ENCODE measurements at regions of chr1 and their contacts with region 1.

Region 1: GRCh38 chr1:220089650-220090556 is at the start of gene BPNT1:
- DNase-seq: peak; percentile 90 to 98
- H3K4me3 ChIP-seq: peak within 1 kb of the TSS; percentile 88
- H3K27ac ChIP-seq: peak within 1 kb of the TSS; percentile 21; the same call in 1 of the 2 replicates
- H3K4me1 ChIP-seq: peaks cover 7% of the 10 kb centered on the region
- H3K27me3 ChIP-seq: no peaks in the 10 kb centered on the region
- CTCF ChIP-seq: 0 out of 2 replicates have a peak, but pooled peaks have one; percentile 17
- total RNA-seq, gene BPNT1: 41.5 and 50.8 TPM in 2 replicates

Region 2: GRCh38 chr1:219798283-219799030 is 291.4 kb before region 1 on chr1:
- CTCF ChIA-PET with region 1: no interaction called
- POLR2A ChIA-PET with region 1: no interaction called
- intact Hi-C with region 1: no loop called
- DNase-seq: no peak
- H3K4me3 ChIP-seq: no peak overlapping the region
- H3K27ac ChIP-seq: no peak overlapping the region
- H3K4me1 ChIP-seq: no peaks in the 10 kb centered on the region; the same call in 1 of the 2 replicates
- H3K27me3 ChIP-seq: no peaks in the 10 kb centered on the region
- CTCF ChIP-seq: no peak

Region 3: DNA sequence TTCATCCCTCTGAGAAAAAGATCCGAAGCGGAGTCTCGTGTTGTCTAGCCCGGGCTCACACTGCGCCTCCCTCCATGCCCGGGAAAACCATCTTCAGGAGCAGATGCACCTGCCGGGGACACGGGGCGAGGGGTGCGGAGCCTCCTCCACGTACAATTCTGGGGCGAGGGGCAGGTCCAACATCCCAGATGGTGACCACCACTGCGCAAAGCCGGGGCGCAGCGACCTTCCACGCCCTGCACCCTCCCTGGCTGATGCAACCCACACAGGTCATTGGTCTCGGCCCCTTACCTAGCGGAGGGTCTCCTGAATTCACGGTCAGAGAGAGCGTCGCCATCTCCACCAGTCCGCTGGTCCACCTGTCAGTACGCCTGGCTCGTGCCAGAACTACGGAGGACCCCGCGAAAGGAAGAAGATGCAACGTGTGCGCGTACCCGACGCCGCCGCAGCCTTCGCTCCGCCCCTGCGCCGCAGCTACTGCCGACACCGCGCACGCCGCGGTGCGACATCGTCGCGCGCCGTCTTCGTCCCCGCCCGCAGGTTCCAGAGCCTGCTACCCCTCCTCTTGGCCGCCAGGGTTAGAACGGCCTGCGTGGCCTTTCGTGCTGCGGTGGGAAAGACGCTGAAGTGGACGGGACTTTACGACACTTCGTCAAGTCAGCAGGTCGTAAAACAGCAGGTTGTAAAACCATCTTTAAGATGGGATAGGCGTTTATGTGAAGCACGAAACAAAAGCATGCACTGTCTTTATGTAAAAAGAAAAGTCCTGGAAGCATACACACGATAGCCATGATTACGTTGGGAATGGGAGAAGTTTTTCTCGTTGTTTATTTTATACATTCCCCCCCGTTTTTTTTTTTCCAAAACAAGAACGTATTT is 43.6 kb before region 1 on chr1 and contains the start of gene EPRS1:
- CTCF ChIA-PET with region 1: interaction called, 8 read pairs
- POLR2A ChIA-PET with region 1: interaction called, 16 read pairs
- intact Hi-C with region 1: loop called (anchors 1 kb)
- DNase-seq: peak; percentile 94 to 97
- H3K4me3 ChIP-seq: peak within 1 kb of the TSS; percentile 95
- H3K27ac ChIP-seq: peak within 1 kb of the TSS; percentile 87
- H3K4me1 ChIP-seq: peaks cover 25% of the 10 kb centered on the region
- H3K27me3 ChIP-seq: no peaks in the 10 kb centered on the region
- CTCF ChIP-seq: peak; percentile 64
- total RNA-seq, gene EPRS1: 158 and 182 TPM in 2 replicates

Region 4: GRCh38 chr1:220604934-220605333 is 515.0 kb after region 1 on chr1:
- CTCF ChIA-PET with region 1: no interaction called
- POLR2A ChIA-PET with region 1: interaction called, 17 read pairs
- intact Hi-C with region 1: no loop called
- DNase-seq: no peak
- H3K4me3 ChIP-seq: no peak overlapping the region
- H3K27ac ChIP-seq: no peak overlapping the region
- H3K4me1 ChIP-seq: no peaks in the 10 kb centered on the region
- H3K27me3 ChIP-seq: no peaks in the 10 kb centered on the region
- CTCF ChIP-seq: no peak

Measured in PC-9 (cell line).